Activated CD4-positive, alpha-beta T cell treated with anti-CD3 and anti-CD28 coated beads, Interleukin-2, amount 10 ng/mL, durations not matched to agents 7 days and 5 days (primary cell): ENCODE measurements at regions of chr19 and their contacts with region 1.

Region 1: GRCh38 chr19:43765109-43765876 is 10.5 kb upstream of the SMG9 start:
- DNase-seq: peak; percentile 80
- H3K4me3 Mint-ChIP-seq: peak overlapping the region; percentile 21
- H3K27ac Mint-ChIP-seq: peak overlapping the region; percentile 86
- H3K4me1 Mint-ChIP-seq: peaks cover 60% of the 10 kb centered on the region
- H3K27me3 Mint-ChIP-seq: no peaks in the 10 kb centered on the region

Region 2: DNA sequence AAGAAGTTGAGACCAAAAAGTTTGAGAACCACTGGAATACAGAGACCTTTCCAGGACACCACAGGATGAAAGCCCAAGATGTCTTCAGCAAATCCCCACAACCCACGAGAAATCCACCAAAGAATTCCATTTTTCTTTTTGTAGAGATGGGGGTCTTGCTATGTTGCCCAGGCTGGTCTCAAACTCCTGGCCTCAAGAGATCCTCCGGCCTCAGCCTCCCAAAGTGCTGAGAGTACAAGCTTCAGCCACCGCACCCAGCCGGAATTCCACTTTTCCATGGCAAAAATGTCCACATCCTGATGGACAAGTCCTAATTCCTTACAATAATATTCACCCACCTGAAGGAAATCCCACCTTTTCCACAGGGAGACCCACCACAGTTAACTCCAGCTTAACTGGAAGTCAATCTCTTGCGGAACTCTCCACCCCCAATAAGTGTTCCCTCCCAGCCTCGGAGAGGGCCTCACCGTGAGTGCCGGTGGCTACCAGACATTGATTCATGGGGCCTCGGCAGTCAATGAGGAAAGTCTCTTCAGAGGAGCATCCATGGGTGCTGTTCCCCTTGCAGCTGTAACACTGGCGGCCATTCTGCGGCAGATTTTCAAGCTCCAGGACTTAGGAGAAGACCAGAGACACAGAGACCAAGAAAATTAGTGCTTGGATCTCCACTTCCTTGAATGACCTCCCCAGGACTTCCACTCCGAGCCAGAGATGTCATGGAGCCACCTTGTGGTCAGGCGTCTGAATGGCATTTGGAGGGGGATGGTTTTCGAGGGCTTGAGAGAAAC is 113.3 kb before region 1 on chr19:
- CTCF ChIA-PET with region 1: no interaction called
- POLR2A ChIA-PET with region 1: no interaction called
- DNase-seq: peak; percentile 55
- H3K4me3 Mint-ChIP-seq: no peak overlapping the region
- H3K27ac Mint-ChIP-seq: no peak overlapping the region
- H3K4me1 Mint-ChIP-seq: peaks cover 6% of the 10 kb centered on the region
- H3K27me3 Mint-ChIP-seq: no peaks in the 10 kb centered on the region

Region 3: GRCh38 chr19:43743976-43744747 is 21.1 kb before region 1 on chr19:
- CTCF ChIA-PET with region 1: interaction called, 12 read pairs
- POLR2A ChIA-PET with region 1: no interaction called
- DNase-seq: no peak
- H3K4me3 Mint-ChIP-seq: no peak overlapping the region
- H3K27ac Mint-ChIP-seq: no peak overlapping the region
- H3K4me1 Mint-ChIP-seq: peaks cover 21% of the 10 kb centered on the region
- H3K27me3 Mint-ChIP-seq: no peaks in the 10 kb centered on the region

Region 4: DNA sequence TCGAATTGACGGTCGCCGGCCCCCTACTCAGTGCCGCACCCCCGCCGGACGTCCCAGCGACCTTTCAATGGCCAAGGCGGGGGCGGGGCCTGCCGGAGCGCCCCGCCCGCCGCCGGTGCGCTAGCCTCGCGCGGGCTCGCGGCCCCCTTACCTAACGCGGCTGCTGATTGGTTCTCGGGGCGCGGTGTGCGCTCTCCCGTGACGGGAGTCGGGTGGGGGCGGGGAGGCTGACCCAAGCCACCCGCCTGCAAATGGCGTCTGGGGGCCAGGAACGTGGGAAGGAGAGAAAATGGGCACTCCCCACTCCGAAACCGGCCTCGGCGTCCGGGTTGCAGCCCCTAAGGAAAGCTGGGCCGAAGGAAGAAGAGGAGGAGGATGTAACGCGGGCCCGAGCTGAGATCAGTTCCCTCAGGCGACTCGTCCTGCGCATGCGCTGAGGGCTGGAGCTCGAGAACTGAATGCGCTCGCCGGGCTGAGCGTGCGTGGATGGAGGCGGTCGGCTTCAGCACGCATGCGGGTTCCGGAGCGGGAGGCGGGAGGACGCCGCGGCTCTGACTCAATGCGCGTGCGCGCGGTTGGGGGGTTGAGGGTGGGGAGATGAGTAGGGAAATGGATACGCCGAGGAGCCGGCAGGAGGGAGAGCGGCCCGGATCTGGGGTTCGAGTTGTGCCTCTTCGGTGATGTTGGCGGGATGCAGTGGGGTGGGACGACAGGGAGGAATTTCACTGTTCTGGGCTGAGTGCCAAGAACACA is 10.6 kb before region 1 on chr19 and contains the start of gene SMG9:
- CTCF ChIA-PET with region 1: interaction called, 81 read pairs
- POLR2A ChIA-PET with region 1: interaction called, 4 read pairs
- DNase-seq: peak; percentile 98
- H3K4me3 Mint-ChIP-seq: peak within 1 kb of the TSS; percentile 97
- H3K27ac Mint-ChIP-seq: peak within 1 kb of the TSS; percentile 99
- H3K4me1 Mint-ChIP-seq: peaks cover 61% of the 10 kb centered on the region
- H3K27me3 Mint-ChIP-seq: no peaks in the 10 kb centered on the region
- total RNA-seq, gene SMG9: 69.1 to 71.0 TPM

Region 5: DNA sequence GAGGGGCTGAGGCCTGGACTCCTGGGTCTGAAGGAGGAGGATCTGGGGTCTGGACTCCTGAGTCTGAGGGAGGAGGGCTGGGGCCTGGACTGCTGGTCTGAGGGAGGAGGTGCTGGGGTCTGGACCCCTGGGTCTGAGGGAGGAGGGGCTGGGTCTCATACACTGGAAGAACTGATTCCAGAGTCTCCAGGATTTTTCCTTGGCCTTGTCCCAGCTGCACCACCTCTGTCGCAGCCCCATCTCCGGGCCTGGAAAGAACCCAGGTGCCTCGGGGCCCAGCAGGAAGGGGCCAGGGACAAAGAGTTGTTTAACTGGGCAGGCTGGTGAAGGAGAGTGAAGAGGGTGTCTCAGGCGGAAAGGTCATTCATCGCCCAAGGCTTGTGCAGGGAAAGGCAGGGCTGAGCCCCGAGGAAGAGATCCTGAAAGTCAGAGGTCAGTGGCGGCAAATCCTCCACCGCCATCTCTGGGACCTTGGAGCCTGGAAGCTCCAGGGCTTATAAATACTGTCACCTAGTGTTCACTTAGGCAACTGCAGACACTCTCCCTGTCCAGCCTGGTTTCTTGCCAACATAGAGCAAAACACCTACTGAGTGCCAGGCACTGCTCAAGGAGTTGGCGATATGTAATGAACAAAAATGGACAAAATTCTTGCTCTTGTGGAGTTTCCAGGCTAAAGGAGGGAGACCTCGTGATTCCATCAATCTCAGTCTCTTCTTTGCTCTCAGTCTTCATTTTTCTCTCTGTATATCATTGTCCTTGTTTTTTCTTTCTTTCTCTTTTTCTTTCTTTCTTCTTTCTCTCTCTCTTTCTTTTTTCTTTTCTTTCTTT is 19.9 kb after region 1 on chr19:
- CTCF ChIA-PET with region 1: interaction called, 88 read pairs
- POLR2A ChIA-PET with region 1: no interaction called
- DNase-seq: peak; percentile 71
- H3K4me3 Mint-ChIP-seq: peak overlapping the region; percentile 6
- H3K27ac Mint-ChIP-seq: peak overlapping the region; percentile 91
- H3K4me1 Mint-ChIP-seq: peaks cover 44% of the 10 kb centered on the region
- H3K27me3 Mint-ChIP-seq: no peaks in the 10 kb centered on the region